Activated naive CD4-positive, alpha-beta T cell treated with anti-CD3 and anti-CD28 coated beads, Interleukin-2, amount 10 ng/mL, durations not matched to agents 7 days and 5 days (primary cell): ENCODE measurements at regions of chr3 and their contacts with region 1.

Region 1: GRCh38 chr3:128112357-128112968 is 11.1 kb downstream of the RUVBL1 start:
- DNase-seq: peak; percentile 56
- H3K4me3 Mint-ChIP-seq: no peak overlapping the region
- H3K27ac Mint-ChIP-seq: peak overlapping the region; percentile 92
- H3K4me1 Mint-ChIP-seq: peaks cover 38% of the 10 kb centered on the region
- H3K27me3 Mint-ChIP-seq: no peaks in the 10 kb centered on the region

Region 2: DNA sequence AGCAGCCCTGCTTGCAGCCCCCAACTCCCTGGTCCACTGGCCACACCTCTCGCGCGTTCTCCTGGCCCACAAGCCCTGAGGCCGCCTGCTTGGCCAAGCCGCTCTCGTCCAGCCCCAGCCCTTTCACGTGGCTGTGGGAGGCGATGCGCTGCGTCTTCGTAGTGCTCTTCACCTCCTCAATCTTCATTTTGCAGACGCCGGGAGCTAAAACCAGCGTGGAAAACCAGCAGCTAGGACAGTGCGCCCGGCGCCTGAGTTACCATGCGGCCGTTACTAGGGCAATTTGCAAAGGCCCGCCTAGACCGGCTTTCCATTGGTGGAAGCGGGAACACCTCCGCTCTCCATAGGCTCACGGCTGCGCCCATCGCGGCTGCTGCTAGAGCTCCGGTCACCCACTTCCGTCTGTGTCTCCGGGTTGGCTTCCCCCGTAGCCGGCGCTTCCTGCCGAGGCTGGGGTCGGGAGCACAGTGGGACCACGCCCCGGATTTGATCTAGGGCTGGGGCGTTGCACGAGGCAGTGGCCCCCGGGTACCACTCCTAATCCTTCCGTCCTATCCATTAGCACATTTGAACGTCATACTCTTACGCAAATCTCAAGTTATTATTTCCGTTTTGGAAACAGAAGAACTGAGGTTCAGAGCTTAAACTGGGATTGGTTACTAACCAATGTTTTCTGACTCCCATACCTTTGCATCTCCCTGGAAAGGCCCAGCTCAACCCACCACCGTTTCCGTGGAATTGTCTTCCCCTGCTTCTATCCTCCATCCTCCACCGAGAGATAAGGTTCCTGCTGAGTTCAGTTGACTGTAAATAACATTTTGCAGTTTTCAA is 11.3 kb after region 1 on chr3 and contains the start of gene RUVBL1:
- CTCF ChIA-PET with region 1: interaction called, 11 read pairs
- DNase-seq: peak; percentile 98
- H3K4me3 Mint-ChIP-seq: peak within 1 kb of the TSS; percentile 98
- H3K27ac Mint-ChIP-seq: peak within 1 kb of the TSS; percentile 94
- H3K4me1 Mint-ChIP-seq: peaks cover 29% of the 10 kb centered on the region
- H3K27me3 Mint-ChIP-seq: peaks cover 5% of the 10 kb centered on the region